Endothelial cell of umbilical vein (primary cell): ENCODE measurements at regions of chr1 and their contacts with region 1.

Region 1: DNA sequence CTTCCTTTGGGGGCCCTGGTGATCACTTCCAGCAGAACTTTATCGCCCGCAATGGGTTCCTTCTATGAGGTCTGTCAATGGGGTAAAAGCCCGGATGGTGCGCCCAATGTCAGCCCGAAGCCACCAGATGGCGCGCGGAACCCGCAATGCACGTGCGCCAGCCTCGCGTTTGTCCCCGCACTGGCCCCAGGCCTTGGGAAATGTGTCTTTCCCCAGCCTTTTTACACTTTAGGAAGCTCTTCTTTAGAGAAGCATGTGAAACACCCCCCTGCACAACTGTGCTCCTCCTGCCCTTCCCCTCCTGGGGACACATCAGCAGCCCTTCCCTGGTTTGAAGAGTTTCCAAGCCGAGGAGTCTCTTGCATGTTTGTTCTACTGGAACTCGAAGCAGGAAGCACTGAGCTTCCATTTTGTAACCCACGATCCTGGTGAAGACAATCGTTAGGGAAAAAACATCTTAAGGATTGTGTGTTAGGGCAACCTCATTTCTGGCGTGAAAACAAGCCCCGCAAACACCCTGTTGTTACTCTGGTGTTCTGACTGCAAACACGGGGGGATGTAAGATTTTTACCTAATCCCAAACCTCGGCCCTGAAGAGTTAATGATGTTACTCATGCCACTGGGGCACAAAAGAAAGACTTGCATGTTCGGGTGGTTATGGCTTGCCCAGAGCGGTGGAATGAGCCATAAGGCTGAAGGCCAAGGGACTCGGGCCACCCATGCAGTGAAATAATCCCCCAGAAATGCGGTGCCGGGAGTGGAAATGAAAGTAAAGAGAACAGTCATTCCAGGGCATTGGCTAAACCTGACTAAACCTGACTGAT is 20.4 kb upstream of the TARBP1 start:
- DNase-seq: peak; percentile 84
- H3K4me3 ChIP-seq: no peak overlapping the region
- H3K27ac ChIP-seq: peak overlapping the region; percentile 26
- H3K4me1 ChIP-seq: peaks cover 8% of the 10 kb centered on the region
- H3K27me3 ChIP-seq: no peaks in the 10 kb centered on the region
- CTCF ChIP-seq: peak; percentile 90 to 94
- POLR2A ChIP-seq: no peak

Region 2: GRCh38 chr1:234458352-234459017 is 40.8 kb before region 1 on chr1:
- CTCF ChIA-PET with region 1: no interaction called
- POLR2A ChIA-PET with region 1: no interaction called
- dilution Hi-C with region 1: no loop called
- intact Hi-C with region 1: no loop called
- DNase-seq: no peak
- H3K4me3 ChIP-seq: no peak overlapping the region
- H3K27ac ChIP-seq: no peak overlapping the region
- H3K4me1 ChIP-seq: no peaks in the 10 kb centered on the region
- H3K27me3 ChIP-seq: no peaks in the 10 kb centered on the region
- CTCF ChIP-seq: no peak
- POLR2A ChIP-seq: no peak

Region 3: GRCh38 chr1:234478481-234479309 is 20.6 kb before region 1 on chr1 and contains the start of gene TARBP1:
- CTCF ChIA-PET with region 1: no interaction called
- POLR2A ChIA-PET with region 1: no interaction called
- dilution Hi-C with region 1: no loop called
- intact Hi-C with region 1: no loop called
- DNase-seq: peak; percentile 75
- H3K4me3 ChIP-seq: peak within 1 kb of the TSS; percentile 46 to 78 (median 48)
- H3K27ac ChIP-seq: peak within 1 kb of the TSS; percentile 35
- H3K4me1 ChIP-seq: peaks cover 6% of the 10 kb centered on the region
- H3K27me3 ChIP-seq: peaks cover 18 to 21% of the 10 kb centered on the region in 2 experiments
- CTCF ChIP-seq: peak in 1 of 2 donors; percentile 27
- POLR2A ChIP-seq: peak; percentile 71
- total RNA-seq, gene TARBP1: 21.0 and 23.4 TPM in 2 replicates

Region 4: GRCh38 chr1:234509452-234510328 is 10.4 kb after region 1 on chr1:
- CTCF ChIA-PET with region 1: interaction called, 17 read pairs
- POLR2A ChIA-PET with region 1: interaction called, 3 read pairs
- dilution Hi-C with region 1: no loop called
- intact Hi-C with region 1: no loop called
- DNase-seq: no peak
- H3K4me3 ChIP-seq: no peak overlapping the region
- H3K27ac ChIP-seq: no peak overlapping the region
- H3K4me1 ChIP-seq: no peaks in the 10 kb centered on the region
- H3K27me3 ChIP-seq: no peaks in the 10 kb centered on the region
- CTCF ChIP-seq: no peak
- POLR2A ChIP-seq: no peak

Region 5: DNA sequence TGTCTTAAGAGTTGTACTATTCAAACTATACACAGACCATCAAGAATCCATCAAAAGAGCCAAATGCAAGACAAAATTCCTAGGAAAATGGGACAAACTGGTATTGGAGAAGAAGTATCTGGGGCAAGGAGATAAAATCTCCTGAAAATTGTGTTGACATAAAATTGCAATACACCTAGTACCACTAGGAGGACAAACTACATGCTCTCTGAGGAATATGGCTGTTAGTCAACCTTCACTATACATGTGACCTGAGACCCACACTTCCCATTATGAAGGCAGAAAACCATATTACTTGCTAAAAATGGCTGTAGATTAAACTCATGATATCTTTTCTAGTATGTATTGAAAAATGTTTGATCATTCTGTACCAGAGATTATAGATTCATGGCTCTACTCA is 80.6 kb after region 1 on chr1:
- CTCF ChIA-PET with region 1: interaction called, 8 read pairs
- POLR2A ChIA-PET with region 1: no interaction called
- dilution Hi-C with region 1: no loop called
- intact Hi-C with region 1: loop called (anchors 1 kb)
- DNase-seq: peak; percentile 14
- H3K4me3 ChIP-seq: no peak overlapping the region
- H3K27ac ChIP-seq: no peak overlapping the region
- H3K4me1 ChIP-seq: no peaks in the 10 kb centered on the region
- H3K27me3 ChIP-seq: peaks cover 0 to 1% of the 10 kb centered on the region in 2 experiments
- CTCF ChIP-seq: no peak
- POLR2A ChIP-seq: no peak

Region 6: GRCh38 chr1:234743791-234744611 is 244.7 kb after region 1 on chr1:
- CTCF ChIA-PET with region 1: interaction called, 10 read pairs
- POLR2A ChIA-PET with region 1: no interaction called
- dilution Hi-C with region 1: no loop called
- intact Hi-C with region 1: loop called (anchors 1 kb)
- DNase-seq: peak; percentile 99
- H3K4me3 ChIP-seq: peak overlapping the region in 1 of 3 experiments; percentile 7
- H3K27ac ChIP-seq: peak overlapping the region; percentile 88
- H3K4me1 ChIP-seq: peaks cover 36% of the 10 kb centered on the region
- H3K27me3 ChIP-seq: no peaks in the 10 kb centered on the region
- CTCF ChIP-seq: peak in 1 of 2 donors; percentile 15
- POLR2A ChIP-seq: peak; percentile 91

Region 7: DNA sequence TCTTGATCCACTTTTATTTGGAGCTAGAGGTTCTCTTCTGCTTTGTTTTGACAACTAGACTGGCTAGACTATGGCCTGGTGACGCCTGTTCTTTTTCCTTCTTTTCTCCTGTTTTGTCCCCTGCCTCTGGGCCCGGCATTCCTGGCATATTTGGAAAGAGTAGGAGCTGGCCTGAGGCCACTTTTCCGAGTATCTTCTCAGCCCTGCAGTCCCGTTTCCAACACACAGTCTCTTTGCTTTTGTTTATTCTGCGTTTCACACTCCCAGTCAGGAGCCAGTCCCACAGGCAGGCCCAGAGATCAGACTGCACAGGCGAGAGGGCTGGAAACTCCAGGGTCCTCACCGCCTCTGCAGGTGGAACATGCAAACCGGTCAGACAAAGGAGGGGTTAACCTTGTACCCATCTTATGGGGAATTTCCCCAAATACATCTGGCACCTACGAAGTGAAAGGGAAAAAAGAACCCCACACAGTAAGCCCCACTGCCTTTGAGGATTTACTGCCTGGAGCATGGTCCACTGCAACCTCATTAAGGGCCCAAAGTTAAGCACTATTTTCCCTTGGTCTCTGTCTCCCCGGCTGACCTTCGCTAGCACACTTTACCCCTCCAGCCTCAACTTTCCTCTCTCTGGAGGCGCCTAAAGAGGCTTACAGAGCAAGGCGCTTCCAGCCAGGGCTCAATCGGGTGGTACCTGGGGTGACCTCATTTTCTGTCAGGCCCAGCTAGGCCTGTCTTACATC is 488.3 kb after region 1 on chr1:
- CTCF ChIA-PET with region 1: interaction called, 6 read pairs
- POLR2A ChIA-PET with region 1: no interaction called
- dilution Hi-C with region 1: no loop called
- intact Hi-C with region 1: loop called (anchors 1 kb)
- DNase-seq: peak; percentile 98
- H3K4me3 ChIP-seq: no peak overlapping the region
- H3K27ac ChIP-seq: peak overlapping the region; percentile 100
- H3K4me1 ChIP-seq: peaks cover 47% of the 10 kb centered on the region
- H3K27me3 ChIP-seq: no peaks in the 10 kb centered on the region
- CTCF ChIP-seq: no peak
- POLR2A ChIP-seq: no peak

Region 8: GRCh38 chr1:235105051-235106043 is 606.0 kb after region 1 on chr1:
- CTCF ChIA-PET with region 1: interaction called, 8 read pairs
- POLR2A ChIA-PET with region 1: no interaction called
- dilution Hi-C with region 1: no loop called
- intact Hi-C with region 1: loop called (anchors 1 kb)
- DNase-seq: peak; percentile 46
- H3K4me3 ChIP-seq: no peak overlapping the region
- H3K27ac ChIP-seq: no peak overlapping the region
- H3K4me1 ChIP-seq: peaks cover 3% of the 10 kb centered on the region
- H3K27me3 ChIP-seq: no peaks in the 10 kb centered on the region
- CTCF ChIP-seq: no peak
- POLR2A ChIP-seq: no peak